ENCODE measurements at regions of chr12 and their contacts with region 1.

Region 1: GRCh38 chr12:50038336-50038735 is 13.0 kb upstream of the RACGAP1 start:
- DNase-seq: no peak
- H3K4me3 Mint-ChIP-seq: no peak overlapping the region
- H3K27ac Mint-ChIP-seq: no peak overlapping the region
- H3K4me1 Mint-ChIP-seq: peaks cover 2% of the 10 kb centered on the region
- H3K27me3 Mint-ChIP-seq: peaks cover 45% of the 10 kb centered on the region

Region 2: DNA sequence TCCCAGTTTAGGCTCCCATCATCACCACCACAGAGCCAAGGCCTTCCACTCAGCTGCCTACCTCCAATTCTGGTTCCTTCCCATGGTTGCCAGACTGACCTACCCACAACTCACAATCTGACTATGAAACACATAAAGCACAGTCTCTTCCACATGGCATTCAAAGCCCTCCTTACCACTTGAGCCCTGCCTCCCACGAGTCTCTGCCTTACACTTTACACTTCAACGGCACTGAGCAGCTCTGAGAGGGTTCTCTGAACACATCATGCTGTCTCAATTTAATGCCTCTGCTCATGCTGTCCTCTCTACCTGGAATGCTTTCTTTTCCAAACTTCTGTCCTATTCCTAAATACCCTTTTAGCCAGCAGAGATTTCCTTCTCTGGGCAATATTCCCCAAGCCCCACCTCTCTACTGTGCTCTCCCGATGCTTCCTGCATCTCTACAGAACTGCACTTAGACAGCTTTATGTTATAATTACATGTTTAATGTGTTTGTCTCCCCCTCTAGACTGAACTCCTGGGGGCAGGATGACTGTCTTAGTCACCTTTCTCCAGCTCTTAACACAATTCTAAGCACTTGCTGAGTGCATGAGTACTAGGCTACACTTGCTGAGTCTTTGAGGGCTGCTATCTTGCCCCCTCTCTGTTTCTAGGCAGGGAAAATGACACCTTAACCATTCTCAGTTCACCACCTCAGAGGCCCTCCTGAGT is 354.6 kb before region 1 on chr12:
- CTCF ChIA-PET with region 1: no interaction called
- DNase-seq: no peak
- H3K4me3 Mint-ChIP-seq: no peak overlapping the region
- H3K27ac Mint-ChIP-seq: no peak overlapping the region
- H3K4me1 Mint-ChIP-seq: peaks cover 8% of the 10 kb centered on the region
- H3K27me3 Mint-ChIP-seq: no peaks in the 10 kb centered on the region

Region 3: GRCh38 chr12:50025187-50026059 is 12.9 kb before region 1 on chr12 and contains the start of gene RACGAP1:
- CTCF ChIA-PET with region 1: interaction called, 20 read pairs
- DNase-seq: peak; percentile 98
- H3K4me3 Mint-ChIP-seq: peak within 1 kb of the TSS; percentile 92
- H3K27ac Mint-ChIP-seq: peak within 1 kb of the TSS; percentile 94
- H3K4me1 Mint-ChIP-seq: peaks cover 49% of the 10 kb centered on the region
- H3K27me3 Mint-ChIP-seq: peaks cover 14% of the 10 kb centered on the region

Region 4: GRCh38 chr12:50050410-50051098 is 12.2 kb after region 1 on chr12:
- CTCF ChIA-PET with region 1: interaction called, 94 read pairs
- DNase-seq: no peak
- H3K4me3 Mint-ChIP-seq: no peak overlapping the region
- H3K27ac Mint-ChIP-seq: no peak overlapping the region
- H3K4me1 Mint-ChIP-seq: no peaks in the 10 kb centered on the region
- H3K27me3 Mint-ChIP-seq: peaks cover 56% of the 10 kb centered on the region

Measured in activated naive CD4-positive, alpha-beta T cell treated with anti-CD3 and anti-CD28 coated beads, Interleukin-2, amount 10 ng/mL, durations not matched to agents 7 days and 5 days (primary cell).